WTC11 (cell line): ENCODE measurements at regions of chr6 and their contacts with region 1.

Region 1: GRCh38 chr6:168451805-168452517 is 11.0 kb downstream of the SMOC2 start:
- DNase-seq: peak; percentile 44
- ATAC-seq: peak; percentile 74
- H3K4me3 Mint-ChIP-seq: no peak overlapping the region
- H3K27ac Mint-ChIP-seq: no peak overlapping the region
- H3K4me1 Mint-ChIP-seq: peaks cover 41% of the 10 kb centered on the region
- H3K27me3 Mint-ChIP-seq: no peaks in the 10 kb centered on the region
- CTCF ChIP-seq: 0 out of 2 replicates have a peak, but pooled peaks have one; percentile 22

Region 2: DNA sequence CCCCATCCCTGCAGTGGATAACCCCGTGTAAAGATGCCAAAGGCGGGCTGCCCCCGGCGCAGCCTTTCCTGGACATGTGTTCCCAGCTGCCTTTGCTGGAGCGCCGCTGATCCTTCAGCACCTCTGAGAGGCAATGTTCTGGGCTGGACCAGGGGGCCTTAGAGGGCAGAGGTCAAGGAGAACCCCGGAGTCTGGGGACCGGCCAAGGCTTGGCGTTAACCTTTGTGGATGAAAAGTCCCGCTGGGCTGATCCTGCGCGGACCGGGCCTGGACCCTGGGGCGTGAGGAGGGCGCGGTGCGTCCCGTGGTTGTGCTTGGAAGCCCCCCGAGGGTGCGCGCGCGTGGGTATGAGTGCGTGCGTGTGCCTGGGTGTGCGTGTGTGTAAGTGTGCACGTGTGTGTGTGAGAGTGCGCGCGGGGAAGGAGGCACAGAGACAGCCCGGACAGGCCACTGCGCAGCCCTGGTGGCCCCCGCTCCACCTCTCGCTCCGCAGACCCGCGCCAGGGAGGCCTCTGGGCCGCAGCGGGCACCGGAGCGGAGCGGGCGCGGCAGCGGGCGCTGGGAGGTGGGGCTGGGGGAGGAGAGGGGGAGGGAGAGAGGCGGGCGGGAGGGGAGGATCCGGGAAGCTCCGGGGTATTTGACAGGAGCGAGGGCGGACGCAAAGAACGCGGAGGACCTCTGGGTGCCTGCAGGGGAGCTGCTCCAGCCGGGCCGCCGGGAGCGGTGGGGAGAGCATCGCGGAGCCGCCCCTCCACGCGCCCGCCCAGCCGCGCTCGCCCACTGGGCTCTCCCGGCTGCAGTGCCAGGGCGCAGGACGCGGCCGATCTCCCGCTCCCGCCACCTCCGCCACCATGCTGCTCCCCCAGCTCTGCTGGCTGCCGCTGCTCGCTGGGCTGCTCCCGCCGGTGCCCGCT is 11.2 kb before region 1 on chr6 and contains the start of gene SMOC2:
- CTCF ChIA-PET with region 1: interaction called, 19 read pairs
- POLR2A ChIA-PET with region 1: no interaction called
- DNase-seq: peak; percentile 44
- ATAC-seq: peak; percentile 61
- H3K4me3 Mint-ChIP-seq: peak within 1 kb of the TSS; percentile 68
- H3K27ac Mint-ChIP-seq: no peak within 1 kb of the TSS
- H3K4me1 Mint-ChIP-seq: peaks cover 54% of the 10 kb centered on the region
- H3K27me3 Mint-ChIP-seq: peaks cover 57% of the 10 kb centered on the region
- CTCF ChIP-seq: no peak
- total RNA-seq, gene SMOC2: 3.3 to 3.9 TPM (median 3.6 TPM) in 3 replicates

Region 3: DNA sequence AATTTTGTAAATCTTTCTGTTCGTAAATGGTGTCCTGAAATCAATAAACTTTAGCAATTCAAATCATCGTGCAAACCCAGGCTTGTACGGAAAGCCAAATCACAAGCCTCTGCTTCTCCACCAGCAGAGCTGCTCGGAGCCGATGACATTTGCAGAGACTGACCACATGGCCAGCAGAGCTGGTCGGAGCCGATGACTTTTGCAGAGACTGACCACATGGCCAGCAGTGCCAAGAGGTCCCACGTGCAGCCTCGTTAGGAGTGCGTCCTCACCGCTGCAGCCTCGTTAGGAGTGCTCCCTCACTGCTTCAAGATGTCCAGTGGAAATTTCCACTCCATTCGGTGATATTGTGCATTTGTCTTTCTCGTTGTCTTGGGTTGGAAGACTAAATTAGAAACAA is 17.6 kb after region 1 on chr6:
- CTCF ChIA-PET with region 1: interaction called, 10 read pairs
- POLR2A ChIA-PET with region 1: no interaction called
- DNase-seq: no peak
- ATAC-seq: no peak
- H3K4me3 Mint-ChIP-seq: no peak overlapping the region
- H3K27ac Mint-ChIP-seq: no peak overlapping the region
- H3K4me1 Mint-ChIP-seq: peaks cover 17% of the 10 kb centered on the region
- H3K27me3 Mint-ChIP-seq: no peaks in the 10 kb centered on the region
- CTCF ChIP-seq: no peak

Region 4: GRCh38 chr6:168542301-168542700 is 90.3 kb after region 1 on chr6:
- CTCF ChIA-PET with region 1: interaction called, 16 read pairs
- POLR2A ChIA-PET with region 1: no interaction called
- DNase-seq: no peak
- ATAC-seq: no peak
- H3K4me3 Mint-ChIP-seq: no peak overlapping the region
- H3K27ac Mint-ChIP-seq: no peak overlapping the region; the same call in 1 of the 2 replicates
- H3K4me1 Mint-ChIP-seq: peaks cover 37% of the 10 kb centered on the region
- H3K27me3 Mint-ChIP-seq: no peaks in the 10 kb centered on the region
- CTCF ChIP-seq: no peak

Region 5: DNA sequence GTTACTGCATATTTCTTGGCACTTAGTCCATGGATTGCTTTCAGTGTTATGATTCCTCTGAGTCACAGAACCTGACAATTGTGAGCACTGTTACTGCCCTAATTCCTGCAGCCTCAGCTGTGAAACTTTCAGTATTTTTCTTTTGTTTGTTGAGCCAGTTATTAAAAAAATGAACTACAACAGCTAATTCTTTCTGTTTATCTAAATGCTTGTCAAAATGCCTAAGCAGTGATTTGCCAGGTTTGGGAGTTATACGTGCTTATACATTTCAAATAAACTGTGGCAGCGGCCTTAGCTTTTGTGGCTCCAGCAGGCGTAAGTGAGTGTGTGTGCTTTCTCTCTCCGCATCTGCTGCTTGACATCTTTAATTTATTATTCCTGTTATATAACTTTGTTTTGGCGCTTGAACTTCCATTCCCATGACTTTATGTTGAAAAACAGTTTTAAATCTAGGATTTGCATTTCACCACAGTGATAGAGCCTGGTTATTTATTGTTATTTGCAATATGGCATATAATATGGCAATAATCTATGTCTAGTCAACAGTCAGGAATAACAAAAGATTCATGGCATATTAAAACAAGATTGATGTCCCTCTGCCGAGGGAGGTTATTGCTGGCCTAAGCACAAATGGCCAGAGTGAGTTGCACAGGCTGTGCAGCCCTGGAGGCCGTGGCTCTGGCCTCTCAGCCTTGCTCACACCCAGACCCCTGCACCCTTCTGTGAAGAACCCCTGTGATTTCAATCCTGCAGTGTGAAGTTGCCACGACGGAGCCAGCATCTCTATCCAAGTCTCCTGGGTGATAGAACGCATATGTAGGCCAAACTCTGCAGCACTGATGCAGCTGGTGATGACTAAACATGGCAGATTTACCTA is 498.3 kb after region 1 on chr6:
- CTCF ChIA-PET with region 1: no interaction called
- POLR2A ChIA-PET with region 1: no interaction called
- DNase-seq: no peak
- ATAC-seq: no peak
- H3K4me3 Mint-ChIP-seq: no peak overlapping the region
- H3K27ac Mint-ChIP-seq: no peak overlapping the region
- H3K4me1 Mint-ChIP-seq: peaks cover 2% of the 10 kb centered on the region; the same call in 1 of the 2 replicates
- H3K27me3 Mint-ChIP-seq: no peaks in the 10 kb centered on the region; the same call in 1 of the 2 replicates
- CTCF ChIP-seq: no peak